Common myeloid progenitor, CD34-positive (primary cell): ENCODE measurements at regions of chr15 and their contacts with region 1.

Region 1: DNA sequence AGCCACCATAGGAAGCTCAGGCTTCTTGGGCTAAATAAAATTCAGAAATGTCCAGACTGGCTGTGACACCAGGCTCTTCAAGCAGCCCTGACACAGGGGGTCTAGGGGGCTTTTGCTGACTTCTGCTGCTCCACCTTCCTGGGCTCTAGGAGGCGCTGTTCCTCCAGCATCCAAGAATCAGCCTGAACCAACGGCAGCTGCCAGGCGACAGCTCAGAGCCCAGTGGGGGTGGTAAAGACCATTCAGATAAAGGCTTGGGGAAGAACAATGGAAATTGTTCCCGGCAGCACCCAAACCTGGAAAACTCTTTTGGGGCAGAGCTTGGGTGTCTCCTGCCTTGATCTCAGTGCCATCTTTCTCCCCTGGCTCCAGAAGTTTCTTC is 21.6 kb upstream of the PSTPIP1 start:
- DNase-seq: peak; percentile 72 to 84 (median 80)
- H3K4me3 ChIP-seq: no peak overlapping the region
- H3K27ac ChIP-seq: no peak overlapping the region
- H3K4me1 ChIP-seq: peaks cover 0 to 13% (median 7%) of the 10 kb centered on the region in 4 experiments
- H3K27me3 ChIP-seq: no peaks in the 10 kb centered on the region

Region 2: DNA sequence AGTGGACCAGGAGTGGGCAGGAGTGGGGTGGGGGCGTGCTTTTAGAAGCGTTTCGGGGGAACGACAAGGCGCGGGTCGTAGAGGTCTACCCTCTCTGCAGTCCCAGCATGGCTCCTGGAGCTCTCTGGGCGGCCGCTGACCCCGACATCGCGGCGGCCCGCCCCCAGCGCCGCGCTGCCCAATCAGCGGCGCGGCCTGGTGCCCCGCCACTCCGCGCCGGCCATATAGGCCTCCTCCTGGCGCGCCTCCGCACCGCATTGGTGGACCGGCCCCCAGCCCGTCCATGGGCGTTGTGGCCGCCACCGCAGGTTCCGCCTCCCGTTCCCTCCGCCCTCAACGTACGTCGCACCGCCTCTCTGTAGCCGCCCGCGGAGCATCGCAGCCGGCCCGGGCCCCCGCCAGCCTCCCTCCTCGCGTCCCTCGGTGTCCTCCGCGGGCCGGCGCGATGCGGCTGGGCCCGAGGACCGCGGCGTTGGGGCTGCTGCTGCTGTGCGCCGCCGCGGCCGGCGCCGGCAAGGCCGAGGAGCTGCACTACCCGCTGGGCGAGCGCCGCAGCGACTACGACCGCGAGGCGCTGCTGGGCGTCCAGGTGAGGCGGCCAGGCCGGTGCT is 41.9 kb before region 1 on chr15 and contains the start of gene RCN2:
- CTCF ChIA-PET with region 1: no interaction called
- POLR2A ChIA-PET with region 1: no interaction called
- DNase-seq: peak; percentile 93 to 96 (median 96)
- H3K4me3 ChIP-seq: peak within 1 kb of the TSS; percentile 77 to 90 (median 83)
- H3K27ac ChIP-seq: peak within 1 kb of the TSS; percentile 65 to 86
- H3K4me1 ChIP-seq: peaks cover 3 to 17% (median 10%) of the 10 kb centered on the region in 4 experiments
- H3K27me3 ChIP-seq: no peaks in the 10 kb centered on the region

Region 3: DNA sequence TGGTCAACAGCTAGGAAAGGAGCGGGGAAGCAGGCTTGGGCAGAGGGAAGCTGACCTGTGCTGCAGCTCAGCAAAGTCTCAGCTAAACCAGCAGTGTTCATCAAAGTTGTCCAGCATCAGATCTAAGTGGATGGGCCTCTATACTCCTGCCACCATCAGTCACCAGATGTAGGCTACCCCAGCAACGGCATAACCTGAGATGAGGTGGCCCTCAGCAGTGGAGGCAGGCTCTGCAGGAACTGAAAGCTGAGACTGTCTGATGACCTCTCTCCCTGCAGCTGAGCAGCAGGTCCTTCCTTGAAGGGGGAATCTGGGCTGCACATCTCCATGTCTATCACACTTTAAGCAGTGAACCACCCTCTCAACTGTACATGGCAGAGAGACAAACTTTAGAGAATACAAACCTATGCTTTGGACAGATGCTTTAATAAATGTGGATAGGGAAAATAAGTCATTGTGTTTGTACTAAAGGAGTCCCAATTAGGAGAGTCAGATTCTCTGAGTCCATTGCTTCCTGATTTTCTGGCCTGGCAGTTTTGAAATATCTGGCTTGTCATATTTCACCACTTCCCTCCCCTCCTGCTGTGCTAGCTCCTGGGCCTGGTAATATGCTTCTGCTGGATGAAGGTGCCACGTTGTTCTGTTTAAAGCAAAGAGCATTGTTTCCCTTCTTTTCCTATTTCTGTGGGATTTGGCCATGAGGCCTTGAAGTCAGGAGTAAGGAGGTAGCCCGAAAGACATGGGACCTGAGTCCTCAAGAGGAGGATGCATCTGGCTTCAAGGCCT is 10.4 kb after region 1 on chr15:
- CTCF ChIA-PET with region 1: interaction called, 22 read pairs
- POLR2A ChIA-PET with region 1: interaction called, 3 read pairs
- DNase-seq: peak in 2 of 3 donors; percentile 54 to 59
- H3K4me3 ChIP-seq: no peak overlapping the region
- H3K27ac ChIP-seq: peak overlapping the region in 1 of 2 experiments; percentile 9
- H3K4me1 ChIP-seq: peaks cover 5 to 36% (median 16%) of the 10 kb centered on the region in 4 experiments
- H3K27me3 ChIP-seq: no peaks in the 10 kb centered on the region

Region 4: DNA sequence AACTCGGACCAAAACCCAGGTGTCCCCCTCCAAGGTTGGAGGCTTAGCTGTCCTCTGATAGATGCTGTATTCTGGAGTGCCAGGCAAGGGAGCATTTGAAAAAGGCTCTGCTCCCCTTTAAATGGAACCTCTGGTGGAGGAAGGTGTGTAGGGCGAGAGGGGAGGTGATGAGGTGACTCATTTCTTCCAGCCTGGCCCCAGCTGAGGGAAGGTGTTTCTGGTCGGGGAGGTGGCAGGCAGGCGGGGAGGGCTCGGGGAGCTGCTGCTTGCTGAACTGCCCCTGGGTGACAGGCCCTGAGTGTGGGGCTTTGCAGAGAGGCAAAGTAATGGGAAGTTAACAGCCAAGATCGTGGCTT is 40.4 kb after region 1 on chr15:
- CTCF ChIA-PET with region 1: interaction called, 10 read pairs
- POLR2A ChIA-PET with region 1: no interaction called
- DNase-seq: peak; percentile 40 to 78 (median 75)
- H3K4me3 ChIP-seq: peak overlapping the region in 2 of 7 experiments; percentile 4 to 8
- H3K27ac ChIP-seq: no peak overlapping the region
- H3K4me1 ChIP-seq: peaks cover 6 to 63% (median 49%) of the 10 kb centered on the region in 4 experiments
- H3K27me3 ChIP-seq: no peaks in the 10 kb centered on the region